ENCODE measurements at regions of chr1 and their contacts with region 1.

Region 1: DNA sequence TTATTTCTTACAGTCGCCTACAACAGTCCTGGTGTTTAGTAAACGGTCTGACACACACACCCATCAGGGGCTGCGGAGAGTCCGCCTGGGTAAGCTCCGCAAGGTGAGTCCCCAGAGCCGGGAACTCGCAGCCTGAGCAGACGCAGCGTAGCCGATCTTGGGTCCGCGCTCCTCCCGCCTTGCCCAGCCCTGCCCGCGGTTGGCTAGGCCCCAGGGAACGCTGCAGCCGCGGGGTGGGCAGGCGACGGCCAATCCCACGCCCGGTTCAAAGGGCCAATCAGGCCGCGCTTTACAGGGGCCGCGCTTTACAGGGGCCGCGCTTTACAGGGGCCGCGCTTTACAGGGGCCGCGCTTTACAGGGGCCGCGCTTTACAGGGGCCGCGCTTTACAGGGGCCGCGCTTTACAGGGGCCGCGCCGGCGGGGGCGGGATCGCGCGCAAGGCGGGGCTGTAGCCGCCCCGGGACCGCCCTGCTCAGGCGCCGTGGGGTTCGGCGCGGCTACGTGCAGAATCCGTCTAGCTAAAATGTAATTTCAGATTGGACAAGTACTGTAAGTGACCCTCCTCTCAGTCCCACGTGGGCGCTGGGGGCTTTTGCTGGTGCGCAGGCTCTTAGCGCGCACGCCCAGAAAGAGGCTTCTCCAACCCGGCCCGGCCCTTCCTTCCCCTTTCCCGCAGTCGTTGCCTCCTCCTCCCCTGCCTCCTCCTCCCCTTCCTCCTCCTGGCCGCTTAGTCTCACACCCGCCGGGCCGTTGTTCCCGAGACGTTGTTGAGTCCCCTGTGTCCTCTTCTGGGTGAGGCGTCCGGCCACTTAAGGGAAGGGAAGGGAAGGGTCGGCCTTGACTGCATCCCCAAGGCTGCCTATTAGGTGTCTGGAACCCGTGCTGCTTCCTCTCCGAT is at the start of gene FGGY:
- DNase-seq: peak; percentile 95 to 96 (median 96)
- H3K4me3 ChIP-seq: peak within 1 kb of the TSS; percentile 51
- H3K27ac ChIP-seq: peak within 1 kb of the TSS; percentile 85 to 97
- H3K4me1 ChIP-seq: peaks cover 6% of the 10 kb centered on the region
- H3K27me3 ChIP-seq: no peaks in the 10 kb centered on the region
- CTCF ChIP-seq: no peak
- EP300 ChIP-seq: peak; percentile 41
- POLR2A ChIP-seq: peak; percentile 90
- total RNA-seq, gene FGGY: 28.8 to 62.0 (median 50.5) TPM

Region 2: DNA sequence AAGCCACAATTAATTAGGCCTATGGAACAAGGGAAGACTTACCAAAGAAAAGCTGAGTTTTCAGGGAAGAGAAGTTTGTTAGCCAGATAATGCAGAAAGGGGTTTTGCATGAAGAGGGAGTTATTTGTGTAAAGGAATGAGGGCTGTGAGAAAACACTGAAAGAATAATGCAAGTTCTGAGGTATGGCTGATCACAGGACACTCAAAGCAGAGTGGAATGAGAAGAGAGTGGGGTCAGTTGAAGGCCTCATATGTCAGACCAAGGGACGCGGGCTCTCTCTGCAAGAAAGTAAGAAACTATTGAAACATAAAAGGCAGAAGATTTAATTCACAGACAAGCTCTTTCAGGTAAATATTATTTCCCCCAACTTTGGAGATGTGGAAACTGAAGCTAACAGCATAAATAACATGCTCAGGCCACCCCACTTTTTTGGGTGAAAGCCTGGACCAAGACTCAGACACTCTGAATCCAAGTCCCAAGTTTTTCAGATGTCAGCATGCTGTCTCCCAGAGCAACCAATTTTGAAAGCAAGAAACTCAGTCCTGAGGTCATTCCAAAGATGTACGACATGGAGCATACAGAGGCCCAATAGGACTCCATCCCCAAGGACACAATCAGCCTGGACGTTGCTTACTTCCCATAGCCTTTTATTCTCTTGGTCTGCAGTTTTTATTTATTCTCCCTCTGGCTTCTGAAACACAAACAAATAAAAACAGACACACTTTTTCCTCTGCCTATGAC is 47.0 kb before region 1 on chr1:
- intact Hi-C with region 1: no loop called
- DNase-seq: no peak
- H3K4me3 ChIP-seq: no peak overlapping the region
- H3K27ac ChIP-seq: no peak overlapping the region
- H3K4me1 ChIP-seq: no peaks in the 10 kb centered on the region
- H3K27me3 ChIP-seq: no peaks in the 10 kb centered on the region
- CTCF ChIP-seq: no peak
- EP300 ChIP-seq: no peak
- POLR2A ChIP-seq: no peak

Region 3: GRCh38 chr1:59285691-59286090 is 10.9 kb before region 1 on chr1:
- intact Hi-C with region 1: no loop called
- DNase-seq: no peak
- H3K4me3 ChIP-seq: no peak overlapping the region
- H3K27ac ChIP-seq: no peak overlapping the region
- H3K4me1 ChIP-seq: no peaks in the 10 kb centered on the region
- H3K27me3 ChIP-seq: no peaks in the 10 kb centered on the region
- CTCF ChIP-seq: no peak
- EP300 ChIP-seq: no peak
- POLR2A ChIP-seq: no peak

Region 4: GRCh38 chr1:59520827-59521418 is 224.3 kb after region 1 on chr1:
- intact Hi-C with region 1: loop called in 1 of 4 experiments (anchors 5 kb)
- DNase-seq: peak; percentile 70 to 82 (median 76)
- H3K4me3 ChIP-seq: no peak overlapping the region
- H3K27ac ChIP-seq: peak overlapping the region; percentile 13 to 72
- H3K4me1 ChIP-seq: peaks cover 8% of the 10 kb centered on the region
- H3K27me3 ChIP-seq: no peaks in the 10 kb centered on the region
- CTCF ChIP-seq: peak in 1 of 3 donors; percentile 15
- EP300 ChIP-seq: no peak
- POLR2A ChIP-seq: no peak

Region 5: GRCh38 chr1:59699227-59699847 is 402.7 kb after region 1 on chr1:
- intact Hi-C with region 1: loop called in 3 of 4 experiments (anchors 10 kb)
- DNase-seq: peak in 1 of 5 donors; percentile 34
- H3K4me3 ChIP-seq: no peak overlapping the region
- H3K27ac ChIP-seq: no peak overlapping the region
- H3K4me1 ChIP-seq: peaks cover 3% of the 10 kb centered on the region
- H3K27me3 ChIP-seq: no peaks in the 10 kb centered on the region
- CTCF ChIP-seq: peak; percentile 75 to 92 (median 86)
- EP300 ChIP-seq: no peak
- POLR2A ChIP-seq: no peak

Region 6: GRCh38 chr1:59707178-59707791 is 410.7 kb after region 1 on chr1:
- intact Hi-C with region 1: loop called in 1 of 4 experiments (anchors 10 kb)
- DNase-seq: peak; percentile 49 to 77 (median 62)
- H3K4me3 ChIP-seq: no peak overlapping the region
- H3K27ac ChIP-seq: peak overlapping the region in 1 of 2 donors; percentile 41
- H3K4me1 ChIP-seq: peaks cover 11% of the 10 kb centered on the region
- H3K27me3 ChIP-seq: no peaks in the 10 kb centered on the region
- CTCF ChIP-seq: no peak
- EP300 ChIP-seq: no peak
- POLR2A ChIP-seq: no peak